GM10248 (cell line): ENCODE measurements at regions of chr17 and their contacts with region 1.

Region 1: DNA sequence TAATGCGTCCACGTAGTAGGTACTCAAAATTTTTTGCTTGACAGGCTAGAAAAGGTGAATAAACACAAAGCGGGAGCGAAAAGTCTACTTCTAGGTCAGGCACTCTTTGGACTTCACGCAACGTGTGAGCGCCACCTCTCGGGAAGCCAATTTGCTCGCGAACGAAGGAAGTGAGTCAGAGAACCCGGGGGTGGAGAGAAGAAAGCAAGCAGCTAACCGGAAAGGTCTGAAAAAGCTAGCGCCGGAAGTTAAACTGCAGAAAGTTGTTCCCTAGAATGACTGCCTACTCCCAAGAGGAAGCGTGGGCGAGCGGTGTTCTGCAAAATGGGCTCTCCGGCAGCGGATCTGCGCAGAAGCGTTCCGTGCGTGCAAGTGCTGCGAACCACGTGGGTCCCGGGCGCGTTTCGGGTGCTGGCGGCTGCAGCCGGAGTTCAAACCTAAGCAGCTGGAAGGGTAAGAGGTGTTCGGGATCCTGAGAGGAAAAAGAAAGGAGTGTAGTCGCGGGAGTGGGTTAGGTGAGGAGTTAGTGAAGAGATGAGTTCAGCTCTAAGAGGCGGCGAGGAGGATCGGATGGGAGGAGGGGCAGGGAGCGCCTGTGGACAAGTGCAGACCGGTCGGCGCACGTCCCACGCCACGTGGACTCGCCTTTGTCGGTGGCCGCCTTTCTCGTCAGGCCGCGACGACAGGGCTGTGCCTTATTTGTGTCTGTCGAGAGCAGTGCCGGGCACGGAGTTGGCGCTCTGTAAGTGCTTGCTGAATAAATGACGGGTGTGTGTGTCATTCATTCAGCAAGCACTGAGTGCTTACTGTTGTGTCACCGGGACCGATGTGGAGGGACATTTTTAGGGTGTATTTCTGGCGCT is at the start of gene NME1:
- DNase-seq: peak; percentile 95
- CTCF ChIP-seq: peak; percentile 94

Region 2: DNA sequence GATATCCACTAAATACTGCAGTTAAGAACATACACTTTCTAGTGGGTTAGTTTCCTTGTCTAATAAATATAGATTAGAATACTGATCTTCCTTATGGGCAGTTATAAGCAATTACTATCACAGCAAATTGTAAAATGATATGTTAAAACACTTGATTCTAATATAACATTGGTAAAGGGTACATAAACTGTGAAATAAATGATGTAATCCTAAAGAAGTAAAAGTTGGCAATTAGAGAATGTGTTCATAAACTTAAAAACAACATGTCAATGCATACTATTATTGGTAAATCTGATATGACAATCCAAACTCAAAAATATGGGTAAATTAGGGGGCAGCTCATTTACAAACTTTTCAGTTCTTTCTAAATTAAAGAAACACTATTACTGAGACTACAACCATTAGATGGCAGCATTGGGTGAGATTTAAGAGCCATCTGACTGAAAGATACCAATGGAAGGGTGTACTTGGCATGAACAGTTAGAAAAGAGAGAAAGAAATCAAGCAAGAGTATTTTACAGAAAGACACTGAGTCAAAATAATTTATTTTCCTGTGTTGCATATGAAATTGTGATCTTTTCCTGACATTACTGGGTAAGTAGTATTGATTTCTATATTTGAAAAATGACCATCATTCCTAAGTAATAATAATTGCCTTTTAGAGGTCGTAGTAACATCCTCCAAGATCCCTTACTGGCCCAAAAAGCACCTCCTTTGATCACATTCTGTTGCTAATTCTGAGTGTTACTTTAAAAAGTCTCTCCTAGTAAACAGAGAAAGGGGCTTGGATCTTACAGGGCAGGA is 152.4 kb before region 1 on chr17:
- CTCF ChIA-PET with region 1: interaction called, 57 read pairs
- POLR2A ChIA-PET with region 1: no interaction called
- DNase-seq: peak; percentile 51
- CTCF ChIP-seq: peak; percentile 47

Region 3: DNA sequence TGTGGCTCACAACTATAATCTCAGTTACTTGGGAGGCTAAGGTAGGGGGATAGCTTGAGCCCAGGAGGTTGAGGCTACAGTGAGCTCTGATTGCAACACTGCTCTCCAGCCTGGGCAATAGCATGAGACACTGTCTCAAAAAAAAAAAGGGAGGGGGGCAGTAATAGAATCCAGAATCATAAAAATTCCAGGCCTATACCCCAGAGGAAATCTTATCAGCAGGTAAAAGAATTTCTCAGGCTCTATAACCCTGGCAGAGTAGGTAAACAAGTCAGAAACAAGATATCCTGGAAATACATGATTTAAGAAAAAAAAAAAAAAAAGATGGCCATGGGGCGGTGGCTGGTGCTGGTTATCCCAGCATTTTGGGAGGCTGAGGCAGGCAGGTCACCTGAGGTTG is 45.7 kb before region 1 on chr17:
- CTCF ChIA-PET with region 1: interaction called, 11 read pairs
- POLR2A ChIA-PET with region 1: no interaction called
- DNase-seq: no peak
- CTCF ChIP-seq: no peak

Region 4: DNA sequence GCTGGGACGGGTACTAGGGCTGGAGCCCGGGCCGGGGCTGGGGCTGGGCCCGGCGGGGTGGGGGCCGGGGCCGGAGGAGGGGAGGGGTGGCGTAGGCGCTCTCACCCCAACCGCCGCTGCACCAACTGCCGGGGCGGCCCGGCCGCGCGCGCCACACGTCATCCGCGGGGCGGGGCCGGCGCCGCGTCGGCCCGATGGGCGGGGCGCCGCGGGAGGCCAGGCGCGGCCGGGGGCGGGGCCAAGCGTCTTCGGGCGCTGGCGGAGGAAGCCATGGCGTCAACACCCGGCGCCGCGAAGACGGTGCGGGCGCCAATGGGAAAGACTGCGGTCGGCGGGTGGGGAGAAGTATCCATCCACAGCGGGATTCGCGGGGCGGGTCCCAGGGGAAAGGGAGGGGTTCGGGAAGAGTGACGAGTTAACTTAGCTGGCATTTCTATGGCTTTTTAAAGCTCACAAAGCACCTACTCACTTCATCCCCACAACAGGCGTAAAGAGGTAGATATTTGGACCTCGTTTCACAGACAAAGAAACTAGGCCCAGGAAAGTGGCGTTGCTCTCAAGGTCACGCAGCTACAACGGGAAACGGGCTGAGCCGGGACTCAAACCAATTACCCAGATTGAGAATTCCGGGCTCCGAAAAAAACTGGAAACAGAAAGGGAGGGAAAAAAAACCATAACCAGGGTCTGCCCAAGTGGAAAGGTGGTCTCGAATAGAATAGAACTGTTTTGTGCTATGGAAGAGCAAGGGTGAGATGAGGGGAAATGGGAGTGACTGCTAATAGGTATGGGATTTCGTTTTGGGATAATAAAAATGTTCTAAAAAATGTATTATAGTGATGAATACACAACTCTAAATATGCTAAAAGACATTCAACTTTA is 32.5 kb before region 1 on chr17 and contains the start of gene SPAG9:
- CTCF ChIA-PET with region 1: interaction called, 19 read pairs
- POLR2A ChIA-PET with region 1: interaction called, 6 read pairs
- DNase-seq: peak; percentile 97
- CTCF ChIP-seq: no peak

Region 5: GRCh38 chr17:51132964-51133319 is 20.5 kb before region 1 on chr17:
- CTCF ChIA-PET with region 1: interaction called, 13 read pairs
- POLR2A ChIA-PET with region 1: no interaction called
- DNase-seq: peak; percentile 46
- CTCF ChIP-seq: no peak

Region 6: DNA sequence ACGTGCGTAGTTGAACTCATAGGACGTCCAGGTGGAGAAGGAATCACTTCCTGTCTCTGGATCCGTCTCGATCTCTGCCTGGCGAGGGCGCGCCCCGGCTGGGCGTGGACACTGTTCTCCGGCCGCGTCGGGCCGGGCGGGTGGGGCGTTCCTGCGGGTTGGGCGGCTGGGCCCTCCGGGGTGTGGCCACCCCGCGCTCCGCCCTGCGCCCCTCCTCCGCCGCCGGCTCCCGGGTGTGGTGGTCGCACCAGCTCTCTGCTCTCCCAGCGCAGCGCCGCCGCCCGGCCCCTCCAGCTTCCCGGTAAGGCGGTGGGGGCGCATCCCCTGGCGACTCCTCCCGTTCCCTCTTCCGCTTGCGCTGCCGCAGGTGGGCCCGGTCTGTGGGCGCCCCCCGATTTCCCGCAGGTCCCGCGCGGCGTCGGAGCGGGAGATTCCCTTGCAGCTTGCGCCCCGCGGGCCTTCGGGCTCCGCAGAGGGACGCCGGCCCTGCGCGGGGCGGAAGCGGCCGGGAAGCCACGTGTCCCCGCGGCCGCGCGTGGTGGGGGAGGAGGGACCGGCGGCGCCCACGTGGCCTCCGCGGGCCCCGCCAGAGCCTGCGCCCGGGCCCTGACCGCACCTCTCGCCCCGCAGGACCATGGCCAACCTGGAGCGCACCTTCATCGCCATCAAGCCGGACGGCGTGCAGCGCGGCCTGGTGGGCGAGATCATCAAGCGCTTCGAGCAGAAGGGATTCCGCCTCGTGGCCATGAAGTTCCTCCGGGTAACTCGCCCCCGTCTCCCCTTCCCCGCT is 13.0 kb after region 1 on chr17 and contains the start of gene NME2:
- CTCF ChIA-PET with region 1: interaction called, 15 read pairs
- POLR2A ChIA-PET with region 1: interaction called, 6 read pairs
- DNase-seq: peak; percentile 95
- CTCF ChIP-seq: no peak

Region 7: GRCh38 chr17:51238255-51238887 is 84.9 kb after region 1 on chr17:
- CTCF ChIA-PET with region 1: no interaction called
- POLR2A ChIA-PET with region 1: no interaction called
- DNase-seq: peak; percentile 56
- CTCF ChIP-seq: no peak